ENCODE measurements at regions of chr5 and their contacts with region 1.

Region 1: GRCh38 chr5:82413302-82414040 is 135.3 kb upstream of the RPS23 start:
- DNase-seq: no peak
- H3K4me3 Mint-ChIP-seq: no peak overlapping the region
- H3K27ac Mint-ChIP-seq: no peak overlapping the region
- H3K4me1 Mint-ChIP-seq: peaks cover 23% of the 10 kb centered on the region
- H3K27me3 Mint-ChIP-seq: no peaks in the 10 kb centered on the region
- CTCF ChIP-seq: no peak

Region 2: GRCh38 chr5:82426464-82427154 is 13.1 kb after region 1 on chr5:
- CTCF ChIA-PET with region 1: interaction called, 12 read pairs
- intact Hi-C with region 1: no loop called
- DNase-seq: no peak
- H3K4me3 Mint-ChIP-seq: no peak overlapping the region
- H3K27ac Mint-ChIP-seq: no peak overlapping the region
- H3K4me1 Mint-ChIP-seq: peaks cover 34% of the 10 kb centered on the region
- H3K27me3 Mint-ChIP-seq: no peaks in the 10 kb centered on the region
- CTCF ChIP-seq: no peak

Measured in Calu3 (cell line).